ENCODE measurements at regions of chr7 and their contacts with region 1.

Region 1: GRCh38 chr7:6460303-6460702 is 12.5 kb upstream of the DAGLB start:
- DNase-seq: no peak
- ATAC-seq: no peak
- H3K4me3 ChIP-seq: no peak overlapping the region
- H3K4me3 Mint-ChIP-seq: no peak overlapping the region
- H3K27ac ChIP-seq: no peak overlapping the region
- H3K27ac Mint-ChIP-seq: no peak overlapping the region
- H3K4me1 ChIP-seq: no peaks in the 10 kb centered on the region
- H3K4me1 Mint-ChIP-seq: peaks cover 0 to 2% (median 0%) of the 10 kb centered on the region in 3 donors
- H3K27me3 ChIP-seq: no peaks in the 10 kb centered on the region
- H3K27me3 Mint-ChIP-seq: no peaks in the 10 kb centered on the region

Region 2: DNA sequence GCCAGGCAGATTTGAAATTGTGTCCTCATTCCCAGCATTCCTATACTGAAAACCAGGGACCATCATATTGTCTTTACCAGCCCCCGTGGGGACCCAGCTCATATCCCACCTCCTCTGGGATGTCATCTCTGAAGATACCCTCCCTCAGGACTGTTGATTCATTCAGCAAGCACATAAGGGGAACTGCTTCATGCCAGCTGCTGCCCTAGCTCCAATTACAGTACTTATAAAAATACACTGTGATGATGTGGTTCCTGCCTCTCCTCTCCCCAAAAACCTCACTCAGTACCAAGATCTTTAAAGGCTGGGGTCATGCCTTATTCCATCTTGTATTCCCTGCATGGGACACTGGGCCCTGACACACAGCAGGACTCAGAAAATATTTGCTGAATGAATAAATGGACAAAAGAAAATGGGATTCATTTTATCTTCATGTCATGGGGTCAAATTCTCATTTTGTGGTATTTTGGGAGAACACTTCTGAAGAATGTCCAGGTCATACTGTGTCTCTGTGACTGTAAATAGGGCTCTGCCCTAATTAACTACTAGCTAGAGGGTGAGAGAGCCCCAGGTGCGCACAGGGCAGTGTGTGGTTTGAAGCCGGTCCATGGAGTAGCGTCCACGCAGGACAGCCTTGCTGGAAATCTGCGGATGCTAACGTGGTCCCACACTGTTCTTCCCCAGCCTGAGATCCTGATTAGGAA is 16.4 kb after region 1 on chr7:
- CTCF ChIA-PET with region 1: interaction called in 1 of 2 experiments, 14 read pairs
- POLR2A ChIA-PET with region 1: interaction called in 1 of 2 experiments, 3 read pairs
- DNase-seq: no peak
- ATAC-seq: no peak
- H3K4me3 ChIP-seq: no peak overlapping the region
- H3K4me3 Mint-ChIP-seq: no peak overlapping the region
- H3K27ac ChIP-seq: no peak overlapping the region
- H3K27ac Mint-ChIP-seq: peak overlapping the region in 1 of 2 donors; percentile 8
- H3K4me1 ChIP-seq: peaks cover 2 to 37% of the 10 kb centered on the region in 2 experiments
- H3K4me1 Mint-ChIP-seq: peaks cover 71 to 74% (median 72%) of the 10 kb centered on the region in 3 donors
- H3K27me3 ChIP-seq: no peaks in the 10 kb centered on the region
- H3K27me3 Mint-ChIP-seq: no peaks in the 10 kb centered on the region

Measured in T-cell (primary cell).